ENCODE measurements at regions of chr9 and their contacts with region 1.

Region 1: GRCh38 chr9:72271613-72272478 is 93.2 kb downstream of the ZFAND5 start:
- DNase-seq: peak; percentile 77
- H3K4me3 Mint-ChIP-seq: no peak overlapping the region
- H3K27ac Mint-ChIP-seq: no peak overlapping the region
- H3K4me1 Mint-ChIP-seq: peaks cover 6% of the 10 kb centered on the region
- H3K27me3 Mint-ChIP-seq: no peaks in the 10 kb centered on the region
- CTCF ChIP-seq: peak; percentile 74

Region 2: DNA sequence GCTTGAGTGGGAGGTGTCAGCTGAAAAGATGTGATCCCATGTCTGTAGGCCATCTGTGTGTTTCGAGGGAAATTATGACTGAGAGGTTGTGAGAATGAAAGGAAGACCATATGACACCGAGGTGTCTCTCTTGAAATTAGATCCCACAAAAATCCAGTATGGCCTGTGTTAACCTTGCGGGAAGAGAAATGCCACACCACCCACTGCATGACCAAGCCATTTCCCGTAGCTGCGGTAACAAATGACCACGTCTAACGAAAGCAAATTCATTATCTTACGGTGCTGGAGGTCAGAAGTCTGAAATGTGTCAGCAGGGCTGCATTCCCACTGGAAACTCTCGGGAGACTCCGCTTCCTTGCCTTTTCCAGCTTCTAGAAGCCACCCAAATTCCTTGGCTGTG is 223.0 kb before region 1 on chr9:
- CTCF ChIA-PET with region 1: interaction called, 11 read pairs
- POLR2A ChIA-PET with region 1: no interaction called
- intact Hi-C with region 1: no loop called
- DNase-seq: no peak
- H3K4me3 Mint-ChIP-seq: no peak overlapping the region
- H3K27ac Mint-ChIP-seq: no peak overlapping the region
- H3K4me1 Mint-ChIP-seq: no peaks in the 10 kb centered on the region
- H3K27me3 Mint-ChIP-seq: no peaks in the 10 kb centered on the region
- CTCF ChIP-seq: no peak

Region 3: GRCh38 chr9:72185561-72185960 is 86.3 kb before region 1 on chr9:
- CTCF ChIA-PET with region 1: no interaction called
- POLR2A ChIA-PET with region 1: no interaction called
- intact Hi-C with region 1: no loop called
- DNase-seq: peak; percentile 34
- H3K4me3 Mint-ChIP-seq: no peak overlapping the region
- H3K27ac Mint-ChIP-seq: no peak overlapping the region
- H3K4me1 Mint-ChIP-seq: no peaks in the 10 kb centered on the region
- H3K27me3 Mint-ChIP-seq: no peaks in the 10 kb centered on the region
- CTCF ChIP-seq: no peak

Region 4: DNA sequence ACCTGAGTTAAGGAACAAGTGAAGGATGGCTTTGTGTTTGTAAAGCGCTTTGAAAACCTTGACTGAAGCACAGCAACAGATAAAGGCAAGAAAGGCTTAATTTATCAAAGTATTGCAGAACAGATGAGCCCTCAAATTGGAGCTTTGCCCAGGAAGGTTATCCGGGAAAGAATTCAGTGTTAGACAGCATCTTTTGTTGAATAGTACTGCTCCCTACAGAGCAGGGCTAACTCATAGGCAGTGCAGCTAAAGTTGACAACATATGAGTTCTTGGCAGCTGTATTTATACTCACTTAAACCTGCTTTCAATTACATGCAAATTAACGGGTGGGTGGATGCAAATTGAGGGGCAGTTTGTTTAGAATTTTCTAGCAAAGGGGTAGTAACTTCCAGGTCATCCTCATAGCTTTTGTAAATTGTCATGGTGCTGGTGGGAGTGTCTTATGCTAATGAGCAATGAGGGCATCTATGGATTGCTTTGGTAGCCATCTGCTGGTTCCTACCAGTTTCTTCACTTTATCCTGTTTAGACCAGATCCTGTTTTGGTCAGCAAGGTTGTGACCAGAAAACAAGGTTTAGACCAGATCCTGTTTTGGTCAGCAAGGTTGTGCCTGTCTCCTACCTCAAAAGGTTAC is 16.8 kb before region 1 on chr9:
- CTCF ChIA-PET with region 1: interaction called, 32 read pairs
- POLR2A ChIA-PET with region 1: no interaction called
- intact Hi-C with region 1: no loop called
- DNase-seq: peak; percentile 47
- H3K4me3 Mint-ChIP-seq: no peak overlapping the region
- H3K27ac Mint-ChIP-seq: no peak overlapping the region
- H3K4me1 Mint-ChIP-seq: peaks cover 8% of the 10 kb centered on the region
- H3K27me3 Mint-ChIP-seq: peaks cover 21% of the 10 kb centered on the region
- CTCF ChIP-seq: no peak

Region 5: DNA sequence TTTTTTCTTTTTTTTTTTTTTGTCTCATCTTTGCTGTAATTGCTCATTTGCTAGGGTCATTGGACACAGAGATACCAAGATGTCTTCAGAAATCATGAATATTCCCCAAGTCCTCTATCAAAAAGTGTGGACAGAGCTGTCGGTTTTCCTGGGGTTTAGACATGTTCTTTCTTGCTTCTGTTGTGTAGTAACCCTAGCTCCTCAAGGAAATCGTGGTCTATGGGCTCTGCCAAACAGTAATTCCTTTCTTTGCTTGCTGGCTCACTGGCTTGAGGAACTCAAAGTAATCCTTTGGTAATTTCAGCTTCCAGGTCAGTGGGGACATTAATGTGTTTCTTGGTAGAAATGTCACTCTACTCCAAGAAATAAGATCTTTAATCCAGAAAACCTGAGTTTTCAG is 351.3 kb after region 1 on chr9:
- CTCF ChIA-PET with region 1: no interaction called
- POLR2A ChIA-PET with region 1: no interaction called
- intact Hi-C with region 1: no loop called
- DNase-seq: peak; percentile 22
- H3K4me3 Mint-ChIP-seq: no peak overlapping the region
- H3K27ac Mint-ChIP-seq: no peak overlapping the region
- H3K4me1 Mint-ChIP-seq: no peaks in the 10 kb centered on the region
- H3K27me3 Mint-ChIP-seq: no peaks in the 10 kb centered on the region
- CTCF ChIP-seq: no peak

Measured in MCF 10A (cell line).